ENCODE measurements at regions of chr19 and their contacts with region 1.

Region 1: GRCh38 chr19:796692-797527 is at the start of gene PTBP1:
- H3K4me3 Mint-ChIP-seq: peak within 1 kb of the TSS; percentile 88
- H3K27ac Mint-ChIP-seq: peak within 1 kb of the TSS; percentile 87
- H3K4me1 Mint-ChIP-seq: peaks cover 32% of the 10 kb centered on the region
- H3K27me3 Mint-ChIP-seq: no peaks in the 10 kb centered on the region

Region 2: DNA sequence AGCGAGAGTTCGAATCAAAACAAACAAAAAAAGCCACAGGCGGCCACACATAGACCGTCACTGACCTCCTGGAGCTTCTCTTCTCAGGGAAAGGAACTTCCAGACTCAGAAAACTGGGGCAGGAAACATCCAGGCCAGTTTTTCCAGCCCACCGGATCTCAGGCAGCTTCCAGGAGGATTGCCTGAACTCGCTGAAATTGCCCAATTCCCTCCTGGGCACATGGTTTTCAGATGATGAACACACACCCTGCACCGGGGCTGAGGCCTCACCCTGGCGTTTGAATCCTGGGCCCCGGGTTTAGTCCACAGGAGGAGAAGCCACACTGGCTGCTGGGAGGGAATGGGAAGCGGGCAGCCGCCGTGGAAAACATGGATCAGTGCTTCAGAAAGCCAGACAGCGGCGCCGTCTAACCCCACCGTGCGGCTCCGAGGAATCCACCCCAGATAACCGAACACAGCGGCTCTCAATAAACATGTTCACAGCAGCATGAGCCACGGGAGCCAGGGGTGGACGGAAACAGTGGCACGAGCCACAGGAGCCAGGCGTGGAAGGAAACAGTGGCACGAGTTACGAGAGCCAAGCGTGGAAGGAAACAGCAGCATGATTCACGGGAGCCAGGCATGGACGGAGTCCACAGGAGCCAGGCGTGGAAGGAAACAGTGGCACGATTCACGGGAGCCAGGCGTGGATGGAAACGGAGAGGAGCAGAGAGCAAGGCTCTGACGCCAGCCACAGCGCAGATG is 17.8 kb before region 1 on chr19:
- intact Hi-C with region 1: no loop called
- H3K4me3 Mint-ChIP-seq: no peak overlapping the region
- H3K27ac Mint-ChIP-seq: no peak overlapping the region
- H3K4me1 Mint-ChIP-seq: no peaks in the 10 kb centered on the region
- H3K27me3 Mint-ChIP-seq: peaks cover 47% of the 10 kb centered on the region

Region 3: GRCh38 chr19:835210-835810 is 38.4 kb after region 1 on chr19:
- intact Hi-C with region 1: no loop called
- H3K4me3 Mint-ChIP-seq: no peak overlapping the region
- H3K27ac Mint-ChIP-seq: no peak overlapping the region
- H3K4me1 Mint-ChIP-seq: peaks cover 40% of the 10 kb centered on the region
- H3K27me3 Mint-ChIP-seq: peaks cover 54% of the 10 kb centered on the region

Region 4: DNA sequence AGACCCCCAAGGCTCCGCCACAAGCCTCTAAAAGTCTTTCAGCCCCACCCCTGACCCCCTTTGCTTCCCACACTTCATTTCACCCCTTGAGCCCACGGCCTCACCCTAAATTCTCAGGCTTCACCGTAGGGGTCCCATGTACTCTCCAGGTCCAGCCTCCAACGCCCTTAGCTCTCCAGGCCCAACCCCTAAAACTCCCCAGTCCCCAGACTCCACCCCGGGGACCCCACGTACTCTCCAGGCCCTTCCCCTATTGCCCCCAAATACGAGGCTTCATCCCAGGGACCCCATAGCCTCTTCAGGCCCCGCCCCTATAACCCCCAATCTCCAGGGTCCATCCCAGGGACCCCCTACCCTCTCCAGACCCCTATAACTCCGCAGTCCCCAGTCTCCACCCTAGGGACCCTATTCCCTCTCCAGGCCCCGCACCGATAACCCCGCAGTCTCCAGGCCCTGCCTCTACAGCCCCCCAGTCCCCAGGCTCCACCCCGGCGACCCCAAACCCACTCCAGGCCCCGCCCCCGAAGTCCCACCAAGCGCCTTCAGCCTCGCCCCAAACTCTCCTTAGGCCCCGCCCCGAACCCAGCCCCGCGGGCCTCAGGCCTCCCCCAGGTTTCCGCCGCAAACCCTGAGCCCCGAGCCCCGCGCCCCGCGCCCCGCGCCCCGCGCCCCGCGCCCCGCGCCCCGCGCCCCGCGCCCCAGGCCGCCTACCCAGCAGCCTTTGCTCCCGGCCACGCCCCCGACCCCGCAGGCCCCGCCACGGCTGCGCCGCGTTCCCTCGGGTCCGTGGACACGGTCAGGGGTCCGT is 95.5 kb after region 1 on chr19:
- intact Hi-C with region 1: loop called (anchors 1 kb)
- H3K4me3 Mint-ChIP-seq: peak overlapping the region; percentile 85
- H3K27ac Mint-ChIP-seq: peak overlapping the region; percentile 98
- H3K4me1 Mint-ChIP-seq: peaks cover 29% of the 10 kb centered on the region
- H3K27me3 Mint-ChIP-seq: no peaks in the 10 kb centered on the region